Mammary epithelial cell (primary cell): ENCODE measurements at regions of chr10 and their contacts with region 1.

Region 1: GRCh38 chr10:14653271-14654228 is 121.1 kb downstream of the FAM107B start:
- DNase-seq: peak; percentile 89
- H3K4me3 ChIP-seq: no peak overlapping the region
- H3K27ac ChIP-seq: peak overlapping the region; percentile 91
- H3K4me1 ChIP-seq: peaks cover 44% of the 10 kb centered on the region
- H3K27me3 ChIP-seq: no peaks in the 10 kb centered on the region
- CTCF ChIP-seq: no peak

Region 2: GRCh38 chr10:13001041-13001886 is 1652.3 kb before region 1 on chr10 and contains the start of gene CCDC3:
- CTCF ChIA-PET with region 1: no interaction called
- dilution Hi-C with region 1: no loop called
- in situ Hi-C with region 1: no loop called
- intact Hi-C with region 1: no loop called
- DNase-seq: no peak
- H3K4me3 ChIP-seq: peak within 1 kb of the TSS in 2 of 3 experiments; percentile 34 to 38
- H3K27ac ChIP-seq: no peak within 1 kb of the TSS
- H3K4me1 ChIP-seq: no peaks in the 10 kb centered on the region
- H3K27me3 ChIP-seq: peaks cover 9% of the 10 kb centered on the region
- CTCF ChIP-seq: no peak
- total RNA-seq, gene CCDC3: 3.7 to 7.7 TPM

Region 3: GRCh38 chr10:14371581-14371980 is 282.0 kb before region 1 on chr10:
- CTCF ChIA-PET with region 1: no interaction called
- dilution Hi-C with region 1: no loop called
- in situ Hi-C with region 1: no loop called
- intact Hi-C with region 1: no loop called
- DNase-seq: no peak
- H3K4me3 ChIP-seq: no peak overlapping the region
- H3K27ac ChIP-seq: no peak overlapping the region
- H3K4me1 ChIP-seq: no peaks in the 10 kb centered on the region
- H3K27me3 ChIP-seq: peaks cover 2% of the 10 kb centered on the region
- CTCF ChIP-seq: no peak

Region 4: GRCh38 chr10:14560274-14560673 is 93.3 kb before region 1 on chr10:
- CTCF ChIA-PET with region 1: no interaction called
- dilution Hi-C with region 1: no loop called
- in situ Hi-C with region 1: no loop called
- intact Hi-C with region 1: loop called (anchors 5 kb)
- DNase-seq: peak; percentile 94
- H3K4me3 ChIP-seq: no peak overlapping the region
- H3K27ac ChIP-seq: no peak overlapping the region
- H3K4me1 ChIP-seq: no peaks in the 10 kb centered on the region
- H3K27me3 ChIP-seq: no peaks in the 10 kb centered on the region
- CTCF ChIP-seq: peak; percentile 3 to 35

Region 5: DNA sequence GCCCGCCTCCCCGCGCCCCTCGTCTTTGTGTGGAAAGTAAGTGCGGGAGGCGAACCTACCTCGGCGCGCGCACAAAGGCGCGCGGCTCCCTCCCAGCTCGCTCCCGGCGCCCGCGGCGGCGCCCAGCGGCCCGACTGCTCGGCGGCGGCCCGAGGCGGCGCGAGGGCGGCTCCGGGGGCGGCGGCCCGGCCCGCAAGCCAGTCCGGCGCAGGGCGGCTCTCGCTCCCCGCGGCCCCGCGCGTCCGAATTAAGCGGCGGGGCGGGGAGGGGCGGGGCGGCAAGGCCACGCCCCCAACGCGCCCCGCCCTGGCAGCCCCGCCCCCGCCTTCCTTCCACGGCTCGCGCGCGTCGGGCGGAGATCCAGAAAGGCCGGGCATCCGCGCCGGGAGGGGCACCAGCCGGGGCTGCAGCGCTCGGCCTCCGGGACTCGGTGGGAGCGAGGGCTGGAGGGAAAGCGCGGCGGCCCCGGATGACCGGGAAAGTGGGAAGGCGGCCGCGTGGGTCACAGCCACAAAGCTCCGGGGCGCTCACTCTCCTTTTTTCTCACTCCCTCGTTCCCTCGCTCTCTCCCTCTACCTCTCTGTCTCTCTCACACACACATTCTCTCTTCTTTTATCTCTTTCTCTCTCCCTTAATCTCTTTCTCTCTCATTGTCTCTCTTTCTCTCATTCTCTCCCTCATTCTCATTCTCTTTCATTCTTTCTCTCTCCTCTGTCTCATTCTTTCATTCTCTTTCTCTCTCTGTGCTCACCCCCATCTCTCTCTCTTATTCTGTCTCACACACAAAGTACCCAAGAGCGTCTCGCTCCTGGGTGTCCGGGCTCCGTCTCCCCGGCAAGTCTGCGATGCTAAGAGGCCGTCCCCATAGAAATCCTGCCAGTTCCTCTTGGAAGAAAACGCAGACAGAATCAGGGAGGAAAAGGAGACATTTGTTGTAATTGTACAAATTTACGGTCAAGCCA is 49.1 kb before region 1 on chr10:
- CTCF ChIA-PET with region 1: no interaction called
- dilution Hi-C with region 1: no loop called
- in situ Hi-C with region 1: no loop called
- intact Hi-C with region 1: loop called (anchors 2 kb)
- DNase-seq: peak; percentile 52
- H3K4me3 ChIP-seq: peak overlapping the region; percentile 33 to 63 (median 61)
- H3K27ac ChIP-seq: peak overlapping the region; percentile 30
- H3K4me1 ChIP-seq: peaks cover 11% of the 10 kb centered on the region
- H3K27me3 ChIP-seq: no peaks in the 10 kb centered on the region
- CTCF ChIP-seq: no peak

Region 6: GRCh38 chr10:14617852-14618251 is 35.7 kb before region 1 on chr10:
- CTCF ChIA-PET with region 1: no interaction called
- dilution Hi-C with region 1: loop called (anchors 5 kb)
- in situ Hi-C with region 1: no loop called
- intact Hi-C with region 1: no loop called
- DNase-seq: peak; percentile 68
- H3K4me3 ChIP-seq: no peak overlapping the region
- H3K27ac ChIP-seq: no peak overlapping the region
- H3K4me1 ChIP-seq: peaks cover 11% of the 10 kb centered on the region
- H3K27me3 ChIP-seq: no peaks in the 10 kb centered on the region
- CTCF ChIP-seq: peak; percentile 11 to 48

Region 7: GRCh38 chr10:14635043-14635710 is 18.4 kb before region 1 on chr10:
- CTCF ChIA-PET with region 1: no interaction called
- dilution Hi-C with region 1: no loop called
- in situ Hi-C with region 1: no loop called
- intact Hi-C with region 1: no loop called
- DNase-seq: no peak
- H3K4me3 ChIP-seq: no peak overlapping the region
- H3K27ac ChIP-seq: no peak overlapping the region
- H3K4me1 ChIP-seq: no peaks in the 10 kb centered on the region
- H3K27me3 ChIP-seq: peaks cover 4% of the 10 kb centered on the region
- CTCF ChIP-seq: no peak

Region 8: DNA sequence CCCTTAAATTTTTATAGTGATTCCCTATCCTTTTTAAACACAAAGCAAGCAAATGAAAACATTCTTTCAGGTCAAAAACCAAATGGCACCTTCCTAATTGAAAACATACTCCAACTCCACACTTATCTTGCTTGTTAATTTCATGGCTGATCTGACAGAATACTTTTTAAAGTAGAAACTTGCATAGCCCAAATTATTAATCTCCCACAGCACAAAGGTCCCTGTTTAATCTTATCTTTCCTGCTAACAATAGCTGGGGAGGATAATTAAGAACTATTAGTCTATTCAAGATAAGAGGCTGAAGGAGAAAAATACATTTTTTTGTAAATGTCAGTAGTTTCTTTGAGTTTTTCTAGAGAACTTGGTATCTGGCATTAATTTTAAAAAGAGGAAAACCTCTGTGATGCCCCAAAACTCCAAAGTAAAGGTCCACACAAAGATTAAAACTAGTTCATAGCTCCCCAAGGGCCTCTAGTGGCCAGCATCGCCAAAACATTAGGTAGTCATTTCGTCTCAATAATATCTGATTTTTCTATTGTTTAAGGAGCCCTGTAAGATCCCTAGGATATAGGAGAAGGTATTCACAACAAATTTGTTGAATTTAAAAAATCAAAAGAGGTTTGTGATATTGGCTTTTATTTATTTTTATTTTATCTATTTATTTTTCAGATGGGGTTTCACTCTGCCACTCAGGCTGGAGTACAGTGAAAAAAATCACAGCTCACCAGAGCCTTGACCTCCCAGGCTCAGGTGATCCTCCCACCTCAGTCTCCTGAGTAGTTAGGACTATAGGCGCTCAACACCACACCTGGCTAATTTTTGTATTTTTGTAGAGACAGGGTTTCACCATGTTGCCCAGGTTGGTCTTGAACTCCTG is 169.6 kb after region 1 on chr10:
- CTCF ChIA-PET with region 1: no interaction called
- dilution Hi-C with region 1: no loop called
- in situ Hi-C with region 1: no loop called
- intact Hi-C with region 1: loop called (anchors 5 kb)
- DNase-seq: peak; percentile 12
- H3K4me3 ChIP-seq: no peak overlapping the region
- H3K27ac ChIP-seq: no peak overlapping the region
- H3K4me1 ChIP-seq: peaks cover 7% of the 10 kb centered on the region
- H3K27me3 ChIP-seq: no peaks in the 10 kb centered on the region
- CTCF ChIP-seq: peak; percentile 57 to 72